ENCODE measurements at regions of chr2 and their contacts with region 1.

Region 1: DNA sequence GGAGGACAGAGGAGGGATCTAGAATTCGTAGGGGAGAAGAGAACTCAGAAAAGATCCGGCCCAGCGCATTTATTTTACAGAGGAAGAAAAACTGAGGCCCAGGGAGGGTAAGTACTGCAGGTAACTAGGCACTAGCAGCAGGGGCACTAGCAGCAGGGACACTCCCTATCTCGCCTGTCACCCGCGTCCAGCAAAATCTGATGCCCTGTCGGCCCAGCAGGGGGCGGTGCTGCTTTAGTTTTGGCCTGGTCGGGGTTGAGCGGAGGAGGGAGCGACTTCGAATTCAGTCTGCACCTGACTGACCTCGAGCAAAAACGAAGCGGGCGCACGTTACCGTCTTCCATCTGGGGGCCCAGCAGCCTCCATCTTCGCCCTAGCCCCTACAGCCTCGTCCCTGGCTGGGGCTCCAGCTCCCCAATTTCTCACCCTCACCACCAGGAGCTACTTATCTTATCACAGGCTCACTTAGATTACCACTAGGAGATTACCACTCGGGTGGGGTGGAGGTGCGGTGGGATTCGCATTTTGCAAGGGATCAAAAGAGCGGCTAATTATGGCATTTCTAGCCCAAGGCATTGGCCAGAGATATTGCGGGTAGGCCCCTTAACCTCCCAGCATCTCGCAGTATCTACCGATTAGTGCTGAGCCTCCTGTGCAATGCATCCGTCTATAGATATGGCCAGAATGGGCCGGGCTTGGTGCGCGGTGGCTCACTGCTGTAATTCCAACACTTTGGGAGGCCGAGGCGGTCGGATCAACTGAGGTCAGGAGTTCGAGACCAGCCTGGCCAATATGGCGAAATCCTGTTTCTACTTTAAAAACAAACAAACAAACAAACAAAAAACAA is 17.8 kb upstream of the CD8A start:
- DNase-seq: peak; percentile 90
- H3K4me3 ChIP-seq: peak overlapping the region; percentile 47
- H3K27ac ChIP-seq: no peak overlapping the region
- H3K4me1 ChIP-seq: peaks cover 5% of the 10 kb centered on the region
- H3K27me3 ChIP-seq: peaks cover 20% of the 10 kb centered on the region
- CTCF ChIP-seq: peak; percentile 94

Region 2: GRCh38 chr2:86396291-86396785 is 412.2 kb before region 1 on chr2:
- CTCF ChIA-PET with region 1: interaction called, 3 read pairs
- POLR2A ChIA-PET with region 1: no interaction called
- intact Hi-C with region 1: loop called (anchors 10 kb)
- DNase-seq: peak; percentile 63
- H3K4me3 ChIP-seq: no peak overlapping the region
- H3K27ac ChIP-seq: no peak overlapping the region
- H3K4me1 ChIP-seq: peaks cover 10% of the 10 kb centered on the region
- H3K27me3 ChIP-seq: no peaks in the 10 kb centered on the region
- CTCF ChIP-seq: peak; percentile 72

Region 3: GRCh38 chr2:86825693-86826381 is 17.3 kb after region 1 on chr2:
- CTCF ChIA-PET with region 1: no interaction called
- POLR2A ChIA-PET with region 1: interaction called, 5 read pairs
- intact Hi-C with region 1: loop called (anchors 2 kb)
- DNase-seq: no peak
- H3K4me3 ChIP-seq: no peak overlapping the region
- H3K27ac ChIP-seq: no peak overlapping the region
- H3K4me1 ChIP-seq: no peaks in the 10 kb centered on the region
- H3K27me3 ChIP-seq: no peaks in the 10 kb centered on the region
- CTCF ChIP-seq: no peak